PC-9 (cell line): ENCODE measurements at regions of chr11 and their contacts with region 1.

Region 1: DNA sequence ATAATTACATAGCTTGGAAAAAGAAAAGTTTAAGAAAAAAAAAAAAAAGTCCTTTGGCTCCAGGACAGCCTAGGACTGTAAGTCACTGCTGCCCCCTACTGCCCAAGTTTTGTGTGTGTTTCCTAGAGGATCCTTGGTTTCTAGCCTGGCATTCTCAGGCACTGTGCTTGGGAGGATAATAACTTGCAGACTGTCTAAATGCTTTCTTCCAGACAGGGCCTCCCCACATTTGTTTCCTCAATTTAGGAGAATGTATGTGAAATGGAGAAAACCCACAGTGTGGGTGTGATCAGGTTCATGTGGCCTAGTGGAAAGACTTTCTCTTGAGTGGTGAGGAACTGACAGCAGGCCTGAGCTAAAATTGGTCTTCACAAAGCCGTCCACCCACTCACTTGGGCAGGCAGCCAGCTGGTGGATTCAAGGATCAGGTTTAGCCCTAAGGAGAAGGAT is 191.0 kb downstream of the NAV2 start:
- DNase-seq: peak in 1 of 2 experiments; percentile 72
- H3K4me3 ChIP-seq: no peak overlapping the region
- H3K27ac ChIP-seq: no peak overlapping the region
- H3K4me1 ChIP-seq: no peaks in the 10 kb centered on the region
- H3K27me3 ChIP-seq: no peaks in the 10 kb centered on the region
- CTCF ChIP-seq: peak; percentile 91

Region 2: DNA sequence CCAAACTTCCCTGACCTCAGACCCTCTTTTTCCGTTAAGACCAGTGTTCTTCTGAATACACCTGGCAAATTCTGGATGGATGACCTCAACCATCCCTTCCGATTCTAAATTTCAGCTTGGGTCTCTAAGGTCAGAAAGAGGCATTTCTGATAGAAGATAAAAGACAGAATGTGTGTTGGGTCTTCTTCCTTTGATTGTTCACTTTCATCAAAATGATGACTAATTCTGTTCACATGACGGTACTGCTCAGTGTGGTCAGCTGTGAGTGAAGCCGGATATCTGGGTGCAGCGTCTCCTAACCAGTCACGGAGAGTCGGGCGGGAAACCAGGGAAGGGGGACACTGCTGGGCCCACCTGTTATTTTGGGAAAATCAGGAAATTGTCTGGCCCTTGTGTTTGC is 342.6 kb before region 1 on chr11:
- CTCF ChIA-PET with region 1: interaction called, 13 read pairs
- POLR2A ChIA-PET with region 1: interaction called, 11 read pairs
- intact Hi-C with region 1: loop called (anchors 1 kb)
- DNase-seq: peak in 1 of 2 experiments; percentile 12
- H3K4me3 ChIP-seq: no peak overlapping the region
- H3K27ac ChIP-seq: no peak overlapping the region
- H3K4me1 ChIP-seq: no peaks in the 10 kb centered on the region
- H3K27me3 ChIP-seq: no peaks in the 10 kb centered on the region
- CTCF ChIP-seq: no peak

Region 3: GRCh38 chr11:19800162-19800561 is 103.5 kb before region 1 on chr11:
- CTCF ChIA-PET with region 1: no interaction called
- POLR2A ChIA-PET with region 1: no interaction called
- intact Hi-C with region 1: loop called (anchors 5 kb)
- DNase-seq: no peak
- H3K4me3 ChIP-seq: no peak overlapping the region
- H3K27ac ChIP-seq: peak overlapping the region; percentile 43
- H3K4me1 ChIP-seq: peaks cover 57% of the 10 kb centered on the region
- H3K27me3 ChIP-seq: no peaks in the 10 kb centered on the region
- CTCF ChIP-seq: no peak; the same call in 1 of the 2 replicates

Region 4: GRCh38 chr11:19951558-19952115 is 48.0 kb after region 1 on chr11:
- CTCF ChIA-PET with region 1: no interaction called
- POLR2A ChIA-PET with region 1: no interaction called
- intact Hi-C with region 1: loop called (anchors 1 kb)
- DNase-seq: peak in 1 of 2 experiments; percentile 47
- H3K4me3 ChIP-seq: no peak overlapping the region
- H3K27ac ChIP-seq: no peak overlapping the region
- H3K4me1 ChIP-seq: peaks cover 3% of the 10 kb centered on the region; the same call in 1 of the 2 replicates
- H3K27me3 ChIP-seq: no peaks in the 10 kb centered on the region
- CTCF ChIP-seq: peak; percentile 85

Region 5: GRCh38 chr11:20122131-20122530 is 218.5 kb after region 1 on chr11:
- CTCF ChIA-PET with region 1: no interaction called
- POLR2A ChIA-PET with region 1: no interaction called
- intact Hi-C with region 1: no loop called
- DNase-seq: no peak
- H3K4me3 ChIP-seq: no peak overlapping the region
- H3K27ac ChIP-seq: no peak overlapping the region
- H3K4me1 ChIP-seq: no peaks in the 10 kb centered on the region
- H3K27me3 ChIP-seq: no peaks in the 10 kb centered on the region
- CTCF ChIP-seq: no peak